Natural killer cell (primary cell): ENCODE measurements at regions of chr1 and their contacts with region 1.

Region 1: GRCh38 chr1:42777852-42778251 is 6.9 kb upstream of the TMEM269 start:
- DNase-seq: peak in 1 of 2 donors; percentile 61
- ATAC-seq: peak in 2 of 3 donors; percentile 61 to 69
- H3K4me3 ChIP-seq: no peak overlapping the region
- H3K4me3 Mint-ChIP-seq: no peak overlapping the region
- H3K27ac ChIP-seq: no peak overlapping the region
- H3K27ac Mint-ChIP-seq: peak overlapping the region in 1 of 2 donors; percentile 35
- H3K4me1 ChIP-seq: no peaks in the 10 kb centered on the region
- H3K4me1 Mint-ChIP-seq: peaks cover 11 to 12% of the 10 kb centered on the region in 2 donors
- H3K27me3 ChIP-seq: no peaks in the 10 kb centered on the region
- H3K27me3 Mint-ChIP-seq: no peaks in the 10 kb centered on the region
- CTCF ChIP-seq: peak; percentile 38

Region 2: GRCh38 chr1:42913426-42914091 is 135.7 kb after region 1 on chr1:
- intact Hi-C with region 1: loop called (anchors 10 kb)
- DNase-seq: peak in 1 of 2 donors; percentile 88
- ATAC-seq: peak; percentile 83 to 90 (median 85)
- H3K4me3 ChIP-seq: no peak overlapping the region
- H3K4me3 Mint-ChIP-seq: peak overlapping the region; percentile 17
- H3K27ac ChIP-seq: no peak overlapping the region
- H3K27ac Mint-ChIP-seq: no peak overlapping the region
- H3K4me1 ChIP-seq: peaks cover 17% of the 10 kb centered on the region
- H3K4me1 Mint-ChIP-seq: peaks cover 18 to 32% of the 10 kb centered on the region in 2 donors
- H3K27me3 ChIP-seq: no peaks in the 10 kb centered on the region
- H3K27me3 Mint-ChIP-seq: no peaks in the 10 kb centered on the region
- CTCF ChIP-seq: peak; percentile 81

Region 3: GRCh38 chr1:43073490-43074230 is 295.8 kb after region 1 on chr1:
- intact Hi-C with region 1: loop called (anchors 2 kb)
- DNase-seq: peak; percentile 66 to 89
- ATAC-seq: peak; percentile 80 to 98 (median 95)
- H3K4me3 ChIP-seq: no peak overlapping the region
- H3K4me3 Mint-ChIP-seq: no peak overlapping the region
- H3K27ac ChIP-seq: no peak overlapping the region
- H3K27ac Mint-ChIP-seq: no peak overlapping the region
- H3K4me1 ChIP-seq: peaks cover 9% of the 10 kb centered on the region
- H3K4me1 Mint-ChIP-seq: peaks cover 5 to 18% of the 10 kb centered on the region in 2 donors
- H3K27me3 ChIP-seq: no peaks in the 10 kb centered on the region
- H3K27me3 Mint-ChIP-seq: no peaks in the 10 kb centered on the region
- CTCF ChIP-seq: peak; percentile 84